Lower leg skin (tissue), 4 donors: ENCODE measurements at regions of chr1 and their contacts with region 1.

Region 1: GRCh38 chr1:9258629-9259028 is 24.1 kb downstream of the H6PD start:
- DNase-seq: no peak
- H3K4me3 ChIP-seq: no peak overlapping the region
- CTCF ChIP-seq: no peak
- POLR2A ChIP-seq: no peak

Region 2: DNA sequence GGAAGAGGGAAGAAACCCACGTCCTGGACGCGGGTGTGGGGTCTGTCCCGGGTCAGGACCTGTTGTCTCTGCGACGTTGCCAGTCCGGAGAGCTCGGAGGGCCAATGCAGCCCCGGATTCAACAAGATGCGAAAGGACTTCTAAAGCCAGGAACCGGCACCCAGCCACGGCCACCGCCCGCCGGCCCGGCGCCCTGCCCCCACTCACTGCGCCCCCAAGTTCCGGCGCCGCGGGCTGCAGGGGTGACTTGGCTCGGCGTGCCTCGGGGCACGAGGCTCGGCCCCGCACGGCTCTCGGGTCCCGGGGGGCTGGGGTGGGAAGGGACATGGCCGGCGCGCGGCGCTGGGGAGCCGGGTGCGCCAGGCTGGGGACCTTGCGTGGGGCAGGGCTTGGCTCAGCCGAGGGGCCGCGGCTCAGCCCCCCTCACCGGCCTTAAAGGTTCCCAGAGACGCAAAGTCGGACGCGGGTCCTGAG is 75.8 kb before region 1 on chr1:
- intact Hi-C with region 1: loop called (anchors 1 kb)
- DNase-seq: no peak
- H3K4me3 ChIP-seq: peak overlapping the region; percentile 63
- CTCF ChIP-seq: no peak
- POLR2A ChIP-seq: no peak